ENCODE measurements at regions of chr17 and their contacts with region 1.

Region 1: GRCh38 chr17:30104575-30105339 is 11.9 kb upstream of the NSRP1 start:
- DNase-seq: peak; percentile 82
- ATAC-seq: peak; percentile 98
- H3K4me3 Mint-ChIP-seq: peak overlapping the region; percentile 72
- H3K27ac Mint-ChIP-seq: no peak overlapping the region
- H3K4me1 Mint-ChIP-seq: peaks cover 6% of the 10 kb centered on the region
- H3K27me3 Mint-ChIP-seq: peaks cover 24% of the 10 kb centered on the region

Region 2: DNA sequence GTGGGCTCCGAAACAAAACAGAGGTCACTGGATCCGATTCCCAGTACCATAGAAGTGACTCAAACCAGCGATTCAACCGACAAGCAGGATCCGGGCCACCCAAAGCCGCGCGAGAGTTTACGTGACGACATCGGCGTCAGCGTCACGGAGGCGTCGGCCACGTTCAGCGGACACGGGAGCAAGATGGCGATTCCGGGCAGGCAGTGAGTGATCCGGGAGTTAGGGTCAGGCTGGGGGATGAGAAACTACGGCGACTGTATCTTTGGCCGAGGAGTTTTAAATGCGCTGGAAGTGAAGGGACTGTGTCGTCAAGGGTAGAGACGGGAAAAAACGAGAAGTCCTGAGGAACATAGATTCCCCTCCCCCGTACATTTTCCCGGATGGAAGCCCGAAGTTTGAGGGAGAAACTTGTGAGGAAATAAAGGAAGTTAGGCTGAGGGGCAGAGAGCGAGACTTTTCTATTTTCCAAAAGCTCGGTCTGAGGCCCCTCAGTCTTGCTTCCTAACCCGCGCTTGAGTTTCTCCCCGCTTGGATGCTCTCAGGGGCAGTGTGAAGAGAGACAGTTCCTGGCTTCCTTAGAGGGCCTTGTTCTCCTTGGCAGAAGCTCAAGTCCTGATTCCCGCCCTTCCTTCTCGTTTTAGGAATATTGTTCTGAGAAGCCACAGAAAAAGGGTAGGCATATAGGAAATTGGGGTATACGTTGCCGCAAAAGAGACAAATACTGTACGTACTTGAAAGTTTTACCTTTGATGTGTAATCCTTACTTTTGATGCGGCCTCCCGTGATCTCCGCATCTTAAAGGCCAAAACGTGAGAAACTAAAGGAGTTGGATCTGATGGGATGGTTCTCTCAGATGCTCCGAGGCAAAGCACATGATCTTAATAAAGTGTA is 12.1 kb after region 1 on chr17 and contains the start of gene NSRP1:
- CTCF ChIA-PET with region 1: interaction called, 106 read pairs
- POLR2A ChIA-PET with region 1: interaction called, 5 read pairs
- DNase-seq: peak; percentile 97
- ATAC-seq: peak; percentile 92
- H3K4me3 Mint-ChIP-seq: peak within 1 kb of the TSS; percentile 95
- H3K27ac Mint-ChIP-seq: peak within 1 kb of the TSS; percentile 99
- H3K4me1 Mint-ChIP-seq: peaks cover 61% of the 10 kb centered on the region
- H3K27me3 Mint-ChIP-seq: no peaks in the 10 kb centered on the region
- total RNA-seq, gene NSRP1: 19.6 to 21.3 TPM

Region 3: DNA sequence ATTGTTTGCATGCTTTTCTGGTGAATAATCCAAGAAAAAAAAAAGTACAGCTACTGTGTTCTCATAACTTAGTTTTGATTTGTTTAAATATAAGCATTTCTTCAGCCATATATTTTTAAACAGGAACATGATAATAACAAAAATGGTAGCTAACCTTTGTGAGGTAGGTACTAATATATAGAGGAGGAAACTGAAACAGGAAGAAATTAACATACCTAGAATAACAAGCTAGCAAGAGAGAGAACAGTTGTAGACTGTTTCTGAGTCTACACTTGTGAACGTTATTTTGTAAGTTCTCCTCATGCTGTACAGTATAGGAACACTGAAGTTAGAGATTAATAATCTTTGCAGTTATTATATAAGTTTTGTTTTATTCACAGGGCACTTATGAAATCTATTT is 61.2 kb after region 1 on chr17:
- CTCF ChIA-PET with region 1: interaction called, 10 read pairs
- POLR2A ChIA-PET with region 1: no interaction called
- DNase-seq: no peak
- ATAC-seq: no peak
- H3K4me3 Mint-ChIP-seq: no peak overlapping the region
- H3K27ac Mint-ChIP-seq: no peak overlapping the region
- H3K4me1 Mint-ChIP-seq: peaks cover 10% of the 10 kb centered on the region
- H3K27me3 Mint-ChIP-seq: no peaks in the 10 kb centered on the region

Region 4: DNA sequence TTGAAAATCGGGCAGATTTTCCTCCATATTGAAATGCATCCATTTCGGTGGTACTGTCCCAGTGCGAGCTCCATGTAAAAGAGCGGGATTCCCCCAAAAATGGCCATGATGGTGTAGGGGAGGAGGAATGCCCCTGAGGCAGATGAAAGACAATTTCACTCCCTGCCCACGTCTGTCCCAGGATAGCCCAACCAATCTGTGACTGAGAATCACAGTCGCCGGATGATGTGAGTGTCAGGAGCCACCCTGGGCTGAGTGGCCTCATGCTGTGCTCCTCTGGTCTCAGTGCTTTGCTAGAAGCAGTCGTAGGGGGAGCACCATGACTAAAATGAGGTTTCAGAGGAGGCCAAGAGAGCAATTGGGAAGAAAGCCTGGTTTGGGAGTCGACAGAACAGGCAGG is 114.0 kb after region 1 on chr17:
- CTCF ChIA-PET with region 1: no interaction called
- POLR2A ChIA-PET with region 1: no interaction called
- DNase-seq: no peak
- ATAC-seq: no peak
- H3K4me3 Mint-ChIP-seq: no peak overlapping the region
- H3K27ac Mint-ChIP-seq: no peak overlapping the region
- H3K4me1 Mint-ChIP-seq: no peaks in the 10 kb centered on the region
- H3K27me3 Mint-ChIP-seq: no peaks in the 10 kb centered on the region

Region 5: GRCh38 chr17:30236766-30237165 is 132.0 kb after region 1 on chr17:
- CTCF ChIA-PET with region 1: interaction called, 17 read pairs
- POLR2A ChIA-PET with region 1: no interaction called
- DNase-seq: peak; percentile 28
- ATAC-seq: no peak
- H3K4me3 Mint-ChIP-seq: peak overlapping the region; percentile 53
- H3K27ac Mint-ChIP-seq: no peak overlapping the region
- H3K4me1 Mint-ChIP-seq: peaks cover 31% of the 10 kb centered on the region
- H3K27me3 Mint-ChIP-seq: peaks cover 65% of the 10 kb centered on the region

Region 6: GRCh38 chr17:30278032-30278431 is 173.3 kb after region 1 on chr17:
- CTCF ChIA-PET with region 1: interaction called, 11 read pairs
- POLR2A ChIA-PET with region 1: no interaction called
- DNase-seq: no peak
- ATAC-seq: no peak
- H3K4me3 Mint-ChIP-seq: no peak overlapping the region
- H3K27ac Mint-ChIP-seq: no peak overlapping the region
- H3K4me1 Mint-ChIP-seq: peaks cover 4% of the 10 kb centered on the region
- H3K27me3 Mint-ChIP-seq: no peaks in the 10 kb centered on the region

Measured in activated CD8-positive, alpha-beta T cell treated with anti-CD3 and anti-CD28 coated beads, Interleukin-2, amount 10 ng/mL, durations not matched to agents 7 days and 5 days (primary cell).